ENCODE measurements at regions of chr4 and their contacts with region 1.

Region 1: DNA sequence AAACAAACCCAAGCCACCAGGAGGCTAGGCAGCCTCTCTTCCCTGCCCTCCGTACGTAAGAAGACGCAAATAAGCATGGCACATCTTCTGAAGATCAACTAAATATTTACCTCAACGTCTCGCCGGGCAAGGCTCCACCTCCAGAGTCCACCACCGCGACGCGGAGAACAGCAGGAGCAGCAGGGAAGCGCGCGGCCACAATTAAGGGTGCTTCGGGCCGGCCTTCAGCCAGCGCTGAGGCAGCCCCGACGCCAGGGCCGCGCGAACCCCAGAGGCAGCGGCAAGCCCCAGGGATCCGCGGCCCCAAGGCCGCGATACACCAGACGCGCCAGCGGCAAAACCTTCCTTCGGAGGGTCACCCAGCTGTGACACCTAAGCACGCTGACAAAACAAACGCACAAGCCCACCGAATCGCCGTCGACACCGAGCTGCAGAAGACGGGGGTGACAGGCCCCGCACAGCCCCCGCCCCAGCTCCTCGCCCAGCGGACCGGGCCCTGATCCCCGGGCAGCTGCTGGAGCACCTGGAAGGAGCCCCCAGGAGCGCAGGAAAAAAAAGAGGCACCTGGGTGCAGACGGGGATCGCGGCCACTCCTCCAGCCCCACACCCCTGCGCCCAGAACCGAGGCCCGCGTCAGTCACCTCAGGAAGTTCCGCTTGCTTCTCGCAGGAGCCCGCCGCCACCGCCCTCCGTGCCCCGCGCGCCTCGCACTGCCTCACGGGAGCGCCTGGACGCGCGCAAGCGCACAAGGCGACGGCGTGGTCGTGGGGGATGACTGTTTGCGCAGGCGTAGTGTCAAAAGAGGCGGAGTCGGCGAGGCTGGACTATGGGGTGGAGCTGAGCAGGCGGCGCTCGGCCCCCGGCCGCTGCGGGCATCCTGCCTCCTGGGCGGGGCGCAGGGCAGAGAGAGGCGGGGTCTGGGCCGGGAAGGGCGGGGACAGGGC is at the starts of genes HAUS3 and POLN:
- DNase-seq: peak; percentile 96 to 100 (median 99)
- ATAC-seq: peak; percentile 97
- H3K4me3 ChIP-seq: peak within 1 kb of the TSS; percentile 93
- H3K4me3 Mint-ChIP-seq: peak within 1 kb of the TSS; percentile 80 to 95 (median 91)
- H3K27ac ChIP-seq: peak within 1 kb of the TSS; percentile 89
- H3K27ac Mint-ChIP-seq: peak within 1 kb of the TSS; percentile 83 to 95 (median 90)
- H3K4me1 ChIP-seq: peaks cover 37 to 38% of the 10 kb centered on the region in 2 donors
- H3K4me1 Mint-ChIP-seq: peaks cover 48 to 65% (median 60%) of the 10 kb centered on the region in 7 donors
- H3K27me3 ChIP-seq: no peaks in the 10 kb centered on the region
- H3K27me3 Mint-ChIP-seq: peaks cover 0 to 6% (median 0%) of the 10 kb centered on the region in 5 donors
- total RNA-seq, gene HAUS3: 24.4 to 88.2 (median 34.1) TPM
- total RNA-seq, gene POLN: 2.4 to 5.4 (median 3.2) TPM

Region 2: GRCh38 chr4:1712216-1713002 is 529.3 kb before region 1 on chr4 and contains the start of gene SLBP:
- CTCF ChIA-PET with region 1: no interaction called
- POLR2A ChIA-PET with region 1: interaction called, 4 read pairs
- intact Hi-C with region 1: loop called in 1 of 2 experiments (anchors 2 kb)
- DNase-seq: peak; percentile 98 to 99 (median 98)
- ATAC-seq: peak; percentile 92
- H3K4me3 ChIP-seq: peak within 1 kb of the TSS; percentile 100
- H3K4me3 Mint-ChIP-seq: peak within 1 kb of the TSS; percentile 89 to 98 (median 94)
- H3K27ac ChIP-seq: peak within 1 kb of the TSS; percentile 99
- H3K27ac Mint-ChIP-seq: peak within 1 kb of the TSS; percentile 90 to 98 (median 94)
- H3K4me1 ChIP-seq: peaks cover 32 to 34% of the 10 kb centered on the region in 2 donors
- H3K4me1 Mint-ChIP-seq: peaks cover 11 to 67% (median 59%) of the 10 kb centered on the region in 7 donors
- H3K27me3 ChIP-seq: no peaks in the 10 kb centered on the region
- H3K27me3 Mint-ChIP-seq: no peaks in the 10 kb centered on the region
- total RNA-seq, gene SLBP: 29.5 to 103 (median 30.3) TPM

Region 3: DNA sequence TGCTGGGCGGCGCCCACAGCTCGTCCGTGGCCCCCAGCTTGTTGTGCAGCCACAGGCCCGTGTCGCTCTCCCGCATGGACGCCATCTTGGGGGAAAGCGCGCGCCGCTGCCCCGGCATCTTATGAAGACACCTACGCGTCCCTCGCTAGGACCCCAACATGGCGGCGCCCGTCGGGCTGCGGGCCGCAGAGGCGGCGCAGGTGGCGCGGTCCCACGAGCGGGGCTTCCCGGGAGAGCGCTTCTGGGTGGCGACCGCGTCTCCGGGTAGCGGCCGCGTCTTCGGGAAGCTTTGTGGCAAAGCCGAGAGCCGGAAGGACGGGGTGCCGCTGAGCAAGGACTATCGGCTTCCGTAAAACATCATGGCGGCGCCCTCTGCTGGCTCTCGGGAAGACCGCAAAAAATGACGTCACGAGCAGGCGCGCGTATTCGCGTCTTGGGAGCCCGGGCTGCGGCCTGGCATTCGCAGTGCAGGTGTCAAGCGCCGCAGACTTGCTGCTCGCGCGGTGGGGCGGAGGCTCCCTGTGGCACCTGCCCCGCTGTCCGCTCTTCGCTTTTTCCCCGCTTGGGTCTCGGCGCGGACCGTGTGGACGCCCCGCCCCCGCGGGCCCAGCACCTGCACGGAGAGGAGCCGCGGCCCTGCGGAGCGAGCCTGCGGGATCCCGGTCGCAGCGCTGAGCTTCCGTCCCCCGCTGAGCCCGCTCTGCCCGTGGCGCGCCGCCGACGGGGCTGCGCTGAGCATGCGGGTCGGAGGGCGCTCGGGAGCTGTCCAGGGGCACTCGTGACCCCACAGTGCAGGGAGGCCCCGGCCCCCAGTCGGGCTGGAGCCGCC is 232.6 kb before region 1 on chr4 and contains the start of gene NELFA:
- CTCF ChIA-PET with region 1: no interaction called
- POLR2A ChIA-PET with region 1: interaction called, 4 read pairs
- intact Hi-C with region 1: loop called (anchors 1 kb)
- DNase-seq: peak; percentile 92 to 98 (median 96)
- ATAC-seq: peak; percentile 93
- H3K4me3 ChIP-seq: peak within 1 kb of the TSS; percentile 96
- H3K4me3 Mint-ChIP-seq: peak within 1 kb of the TSS; percentile 81 to 96 (median 94)
- H3K27ac ChIP-seq: peak within 1 kb of the TSS; percentile 99
- H3K27ac Mint-ChIP-seq: peak within 1 kb of the TSS; percentile 91 to 99 (median 96)
- H3K4me1 ChIP-seq: peaks cover 13 to 24% of the 10 kb centered on the region in 2 donors
- H3K4me1 Mint-ChIP-seq: peaks cover 30 to 38% (median 34%) of the 10 kb centered on the region in 7 donors
- H3K27me3 ChIP-seq: no peaks in the 10 kb centered on the region
- H3K27me3 Mint-ChIP-seq: peaks cover 0 to 20% (median 0%) of the 10 kb centered on the region in 5 donors
- total RNA-seq, gene NELFA: 32.7 to 50.1 (median 43.6) TPM

Region 4: GRCh38 chr4:2262143-2262943 is 20.7 kb after region 1 on chr4:
- CTCF ChIA-PET with region 1: interaction called, 7 read pairs
- POLR2A ChIA-PET with region 1: interaction called, 48 read pairs
- intact Hi-C with region 1: loop called (anchors 1 kb)
- DNase-seq: peak; percentile 95 to 99 (median 98)
- ATAC-seq: peak; percentile 93
- H3K4me3 ChIP-seq: peak overlapping the region; percentile 69
- H3K4me3 Mint-ChIP-seq: peak overlapping the region; percentile 61 to 85 (median 76)
- H3K27ac ChIP-seq: peak overlapping the region; percentile 95
- H3K27ac Mint-ChIP-seq: peak overlapping the region; percentile 61 to 87 (median 83)
- H3K4me1 ChIP-seq: peaks cover 8 to 23% of the 10 kb centered on the region in 2 donors
- H3K4me1 Mint-ChIP-seq: peaks cover 0 to 11% (median 0%) of the 10 kb centered on the region in 7 donors
- H3K27me3 ChIP-seq: no peaks in the 10 kb centered on the region
- H3K27me3 Mint-ChIP-seq: no peaks in the 10 kb centered on the region

Region 5: DNA sequence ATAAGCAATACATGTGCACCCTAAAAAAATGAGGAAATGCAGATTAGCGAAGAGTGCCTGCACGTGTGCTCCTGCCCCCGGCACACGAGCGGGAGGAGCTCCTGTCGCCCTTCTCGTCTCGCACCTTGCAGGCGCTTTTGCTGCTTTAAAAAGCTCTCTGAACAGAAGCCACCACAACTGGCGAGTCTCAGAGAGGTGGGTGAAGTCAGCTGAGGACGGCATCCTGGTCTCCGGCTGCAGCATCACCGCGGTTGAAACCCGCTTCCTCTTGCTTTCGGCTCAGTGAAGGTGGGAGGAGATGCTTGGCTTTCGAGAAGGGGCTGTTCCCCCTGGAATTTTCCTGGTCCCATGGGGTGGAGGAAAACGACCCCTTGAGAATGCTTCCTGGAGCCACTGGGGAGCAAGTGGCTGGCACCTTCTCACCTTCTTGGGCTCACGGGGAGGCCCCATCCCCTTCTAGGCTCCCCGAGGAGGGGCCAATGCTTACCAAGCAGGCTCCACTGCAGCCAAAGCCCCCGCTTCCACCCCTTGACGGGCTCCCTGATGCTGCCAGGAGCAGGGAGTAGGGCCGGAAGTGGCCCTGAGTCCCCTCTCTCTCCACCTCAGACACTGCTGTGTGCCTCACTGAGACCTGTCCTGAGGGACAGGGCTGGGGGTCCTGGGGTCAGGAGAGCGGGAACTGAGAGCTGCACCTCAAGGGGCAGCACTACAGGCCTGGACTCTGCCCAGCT is 49.5 kb after region 1 on chr4:
- CTCF ChIA-PET with region 1: interaction called, 4 read pairs
- POLR2A ChIA-PET with region 1: interaction called, 4 read pairs
- intact Hi-C with region 1: loop called in 1 of 2 experiments (anchors 2 kb)
- DNase-seq: peak; percentile 39 to 89 (median 84)
- ATAC-seq: peak; percentile 94
- H3K4me3 ChIP-seq: peak overlapping the region; percentile 8
- H3K4me3 Mint-ChIP-seq: peak overlapping the region; percentile 77 to 91 (median 86)
- H3K27ac ChIP-seq: peak overlapping the region; percentile 81
- H3K27ac Mint-ChIP-seq: peak overlapping the region; percentile 84 to 99 (median 99)
- H3K4me1 ChIP-seq: peaks cover 25 to 42% of the 10 kb centered on the region in 2 donors
- H3K4me1 Mint-ChIP-seq: peaks cover 14 to 72% (median 43%) of the 10 kb centered on the region in 7 donors
- H3K27me3 ChIP-seq: no peaks in the 10 kb centered on the region
- H3K27me3 Mint-ChIP-seq: peaks cover 0 to 5% (median 0%) of the 10 kb centered on the region in 5 donors

Region 6: DNA sequence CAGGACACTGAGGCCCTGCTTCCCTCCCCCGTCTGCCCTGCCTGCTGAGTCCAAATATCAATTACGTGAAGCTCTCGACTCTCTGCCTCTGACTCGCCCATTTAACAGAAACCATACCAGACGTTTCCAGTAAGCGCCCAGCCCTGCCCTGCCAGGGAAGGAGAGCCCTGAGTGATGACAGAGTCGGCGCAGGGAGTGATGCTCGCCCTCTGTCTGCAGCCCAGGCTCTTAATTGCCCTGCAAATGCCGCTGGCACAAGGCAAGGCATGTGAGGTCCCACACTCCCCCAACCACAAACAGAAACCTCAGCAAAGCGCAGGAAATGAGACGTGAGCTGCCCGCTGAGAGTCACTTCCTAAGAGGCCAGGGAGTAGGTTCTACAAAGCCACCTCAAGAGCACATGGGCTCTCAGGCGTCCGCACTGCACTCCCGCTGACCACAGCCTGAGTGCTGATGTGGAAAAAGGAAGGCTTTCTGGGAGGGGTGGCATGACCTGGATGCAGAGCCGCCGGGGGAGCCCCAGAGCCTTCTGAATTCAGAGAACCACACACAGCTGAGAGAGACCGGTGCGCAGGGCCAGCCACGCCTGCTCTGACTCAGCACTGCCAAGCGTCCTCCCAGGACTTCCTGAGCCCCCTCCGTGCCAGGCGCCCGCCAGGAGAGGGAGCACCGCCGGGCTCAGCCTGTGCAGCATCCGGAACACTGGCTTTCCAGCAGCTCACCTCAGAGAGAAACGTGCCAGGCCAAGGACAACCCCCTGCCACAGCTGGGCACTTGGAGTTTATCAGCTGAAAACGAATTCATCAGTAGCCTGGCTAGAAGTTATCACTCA is 171.4 kb after region 1 on chr4:
- CTCF ChIA-PET with region 1: no interaction called
- POLR2A ChIA-PET with region 1: interaction called, 7 read pairs
- intact Hi-C with region 1: loop called (anchors 1 kb)
- DNase-seq: peak; percentile 60 to 89 (median 85)
- ATAC-seq: peak; percentile 84
- H3K4me3 ChIP-seq: peak overlapping the region; percentile 29
- H3K4me3 Mint-ChIP-seq: peak overlapping the region; percentile 74 to 99 (median 84)
- H3K27ac ChIP-seq: peak overlapping the region; percentile 71
- H3K27ac Mint-ChIP-seq: peak overlapping the region; percentile 90 to 100 (median 96)
- H3K4me1 ChIP-seq: peaks cover 41 to 48% of the 10 kb centered on the region in 2 donors
- H3K4me1 Mint-ChIP-seq: peaks cover 35 to 75% (median 67%) of the 10 kb centered on the region in 7 donors
- H3K27me3 ChIP-seq: no peaks in the 10 kb centered on the region
- H3K27me3 Mint-ChIP-seq: peaks cover 0 to 25% (median 0%) of the 10 kb centered on the region in 5 donors

Region 7: DNA sequence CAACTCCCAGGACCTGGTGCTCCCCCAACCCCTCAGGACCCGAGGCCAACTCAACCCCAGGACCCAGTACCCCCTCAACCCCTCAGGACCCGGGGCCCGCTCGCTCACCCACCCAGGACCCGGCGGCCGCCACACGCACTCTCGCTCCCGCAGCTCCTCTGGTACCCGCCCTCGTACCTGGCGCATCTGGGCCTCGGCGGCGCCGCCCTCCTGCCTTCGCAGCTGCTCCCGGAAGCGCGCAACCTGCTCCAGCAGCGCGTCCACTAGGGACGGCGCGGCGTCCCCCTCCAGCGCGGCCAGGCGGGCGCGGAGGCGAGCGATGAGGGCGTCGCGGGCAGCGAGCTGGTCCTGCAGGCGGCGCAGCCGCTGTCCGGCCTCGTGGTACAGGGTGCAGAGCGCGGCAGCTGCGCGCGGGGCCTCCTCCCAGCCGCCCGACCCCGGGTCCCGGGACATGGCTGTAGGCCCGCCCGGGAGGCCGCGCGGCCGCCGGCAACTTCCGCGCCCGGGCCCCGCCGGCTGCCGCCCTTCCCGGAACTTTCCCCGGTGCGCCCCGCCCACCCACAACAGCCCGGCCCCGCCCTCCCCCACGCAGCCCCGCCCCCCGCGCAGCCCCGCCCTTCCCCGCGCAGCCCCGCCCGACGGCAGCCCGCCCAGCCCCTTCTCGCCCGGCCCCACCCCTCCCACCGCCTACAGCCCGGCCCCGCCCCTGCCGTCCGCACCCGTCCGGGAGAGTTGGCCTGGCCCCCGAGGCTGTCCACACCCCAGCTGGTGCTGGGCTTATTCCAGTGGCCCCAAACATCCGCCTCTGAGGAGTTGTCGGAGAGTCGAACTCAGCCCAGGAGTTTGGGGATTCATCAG is 514.4 kb after region 1 on chr4 and contains the start of gene TNIP2:
- CTCF ChIA-PET with region 1: no interaction called
- POLR2A ChIA-PET with region 1: no interaction called
- intact Hi-C with region 1: loop called (anchors 1 kb)
- DNase-seq: peak; percentile 65 to 85 (median 74)
- ATAC-seq: peak; percentile 90
- H3K4me3 ChIP-seq: peak within 1 kb of the TSS; percentile 64
- H3K4me3 Mint-ChIP-seq: peak within 1 kb of the TSS; percentile 75 to 93 (median 87)
- H3K27ac ChIP-seq: peak within 1 kb of the TSS; percentile 91
- H3K27ac Mint-ChIP-seq: peak within 1 kb of the TSS; percentile 54 to 94 (median 86)
- H3K4me1 ChIP-seq: peaks cover 9 to 12% of the 10 kb centered on the region in 2 donors
- H3K4me1 Mint-ChIP-seq: peaks cover 22 to 29% (median 26%) of the 10 kb centered on the region in 7 donors
- H3K27me3 ChIP-seq: no peaks in the 10 kb centered on the region
- H3K27me3 Mint-ChIP-seq: no peaks in the 10 kb centered on the region
- total RNA-seq, gene TNIP2: 39.4 to 56.0 (median 43.6) TPM

Measured in naive thymus-derived CD4-positive, alpha-beta T cell (primary cell).